Panc1 (cell line): ENCODE measurements at regions of chr6 and their contacts with region 1.

Region 1: GRCh38 chr6:151044465-151045441 is 179.3 kb downstream of the MTHFD1L start:
- DNase-seq: peak; percentile 82
- ATAC-seq: peak; percentile 83
- H3K4me3 ChIP-seq: peak overlapping the region in 1 of 2 experiments; percentile 17; a peak in 2 of 4 replicates
- H3K27ac ChIP-seq: peak overlapping the region; percentile 94
- H3K4me1 ChIP-seq: peaks cover 51% of the 10 kb centered on the region
- H3K27me3 ChIP-seq: no peaks in the 10 kb centered on the region
- CTCF ChIP-seq: no peak

Region 2: DNA sequence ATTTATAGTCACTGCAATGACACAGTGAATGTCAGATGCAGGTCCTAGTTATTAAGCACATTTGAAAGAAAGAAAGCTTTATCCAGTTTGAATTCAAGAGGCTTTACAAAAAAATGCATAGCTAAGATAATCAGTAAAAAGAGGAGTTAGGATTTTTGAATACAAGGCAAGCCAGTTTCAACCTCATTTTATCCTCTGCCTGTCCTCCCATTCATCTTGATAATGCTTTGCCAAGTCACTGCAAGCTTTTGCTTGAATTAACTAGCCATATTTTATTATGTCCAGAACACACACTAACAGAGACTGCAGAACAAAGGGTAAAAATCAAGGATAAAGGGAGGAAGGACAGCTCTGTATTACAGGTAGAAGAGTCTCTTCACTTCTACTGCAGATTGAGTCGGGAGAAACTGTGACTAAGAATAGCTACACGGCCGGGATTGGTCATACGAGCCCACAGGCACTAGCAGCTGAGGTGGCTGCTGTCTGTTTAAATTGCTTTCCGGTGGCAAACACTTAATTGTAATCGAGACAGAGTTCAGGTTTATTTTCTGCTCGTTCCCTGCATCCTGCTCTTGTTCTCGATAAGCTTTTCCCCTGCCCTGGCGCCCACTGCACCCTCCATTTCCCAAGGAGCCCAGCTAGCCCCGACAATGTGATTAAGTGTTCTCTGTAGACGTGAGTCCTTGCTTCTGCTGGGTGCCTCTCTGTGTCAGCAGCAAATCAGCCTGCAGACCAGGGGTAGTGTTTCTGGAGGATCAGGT is 164.5 kb after region 1 on chr6:
- CTCF ChIA-PET with region 1: no interaction called
- POLR2A ChIA-PET with region 1: interaction called, 20 read pairs
- in situ Hi-C with region 1: no loop called
- intact Hi-C with region 1: no loop called
- DNase-seq: no peak
- ATAC-seq: peak; percentile 91
- H3K4me3 ChIP-seq: peak overlapping the region; percentile 11 to 41
- H3K27ac ChIP-seq: peak overlapping the region; percentile 50
- H3K4me1 ChIP-seq: peaks cover 9% of the 10 kb centered on the region; the same call in 1 of the 2 replicates
- H3K27me3 ChIP-seq: no peaks in the 10 kb centered on the region
- CTCF ChIP-seq: no peak

Region 3: GRCh38 chr6:151374036-151374683 is 329.4 kb after region 1 on chr6:
- CTCF ChIA-PET with region 1: no interaction called
- POLR2A ChIA-PET with region 1: interaction called, 13 read pairs
- in situ Hi-C with region 1: no loop called
- intact Hi-C with region 1: no loop called
- DNase-seq: no peak
- ATAC-seq: peak; percentile 52; the same call in 1 of the 2 replicates
- H3K4me3 ChIP-seq: peak overlapping the region; percentile 18 to 36; a peak in 3 of 4 replicates
- H3K27ac ChIP-seq: peak overlapping the region; percentile 82
- H3K4me1 ChIP-seq: peaks cover 10% of the 10 kb centered on the region
- H3K27me3 ChIP-seq: no peaks in the 10 kb centered on the region
- CTCF ChIP-seq: no peak